ENCODE measurements at regions of chrX and their contacts with region 1.

Region 1: DNA sequence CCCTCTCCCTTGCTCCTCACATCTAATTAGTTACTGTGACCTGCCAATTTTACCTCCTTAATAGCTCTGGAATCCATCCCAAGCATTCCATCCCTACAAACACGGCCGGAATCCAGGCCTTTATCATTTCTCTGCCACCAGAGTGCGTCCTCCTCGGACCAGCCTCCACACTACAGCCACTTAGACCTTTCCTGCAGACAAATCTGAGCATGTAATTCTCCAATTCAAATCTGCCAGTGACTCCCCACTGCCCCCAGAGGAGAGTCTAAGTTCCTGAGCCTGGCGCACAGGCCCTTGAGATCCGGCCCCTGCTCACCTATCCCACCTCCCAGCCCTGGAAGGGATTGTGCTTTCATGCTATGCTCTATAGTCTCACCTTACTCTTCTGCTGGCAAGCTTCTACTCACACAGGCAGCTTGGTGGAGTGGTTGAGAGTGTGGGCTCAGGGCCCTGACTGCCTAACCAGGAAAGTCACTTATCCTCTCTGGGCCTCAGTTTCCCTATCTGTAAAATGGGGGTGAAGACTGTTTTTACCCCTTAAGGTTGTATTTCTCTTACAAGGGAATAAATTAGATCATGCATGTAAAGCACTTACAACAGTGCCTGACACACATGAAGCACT is 31.2 kb downstream of the PJA1 start:
- DNase-seq: no peak
- ATAC-seq: no peak
- H3K4me3 ChIP-seq: no peak overlapping the region
- H3K27ac ChIP-seq: no peak overlapping the region
- H3K4me1 ChIP-seq: no peaks in the 10 kb centered on the region
- H3K27me3 ChIP-seq: peaks cover 0 to 3% (median 0%) of the 10 kb centered on the region in 3 donors
- CTCF ChIP-seq: peak in 1 of 5 experiments; percentile 36
- POLR2A ChIP-seq: no peak

Region 2: DNA sequence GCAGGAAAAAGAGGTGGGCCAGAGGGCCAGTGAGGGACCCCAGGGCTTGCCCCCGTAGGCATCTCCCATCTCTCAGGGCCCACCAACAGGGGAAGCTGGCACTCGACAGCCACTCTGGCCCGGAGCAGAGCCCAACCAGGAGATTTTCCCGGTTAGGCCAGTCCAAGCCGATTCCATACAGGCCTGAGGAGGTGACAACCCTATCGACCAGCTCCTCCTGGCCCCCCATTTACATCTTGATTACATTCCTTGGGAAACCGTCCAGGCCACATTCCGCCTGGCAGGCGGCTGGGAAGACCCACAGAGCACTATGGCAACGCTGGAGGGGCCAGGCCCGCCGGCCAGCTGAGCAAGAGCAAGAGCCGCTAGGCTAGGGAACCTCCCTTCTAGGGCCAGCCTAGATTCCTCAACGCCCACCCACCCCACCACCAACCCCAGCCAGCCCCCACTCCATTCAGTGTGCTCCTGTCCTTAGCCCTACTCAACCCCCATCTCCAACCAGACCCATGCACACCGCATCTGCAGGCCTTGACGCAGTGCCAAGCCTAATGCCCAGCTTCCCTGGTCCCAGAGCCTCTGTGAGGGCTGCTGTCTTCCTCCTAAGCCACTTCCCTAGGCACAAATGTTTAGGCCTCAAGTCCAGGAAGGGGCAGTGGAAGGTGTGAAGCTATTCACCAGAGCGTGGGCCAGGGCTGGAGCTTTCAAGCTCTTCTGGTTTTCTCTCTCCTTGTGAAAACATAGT is 144.0 kb before region 1 on chrX:
- in situ Hi-C with region 1: no loop called
- intact Hi-C with region 1: no loop called
- DNase-seq: no peak
- ATAC-seq: peak in 1 of 2 donors; percentile 30
- H3K4me3 ChIP-seq: no peak overlapping the region
- H3K27ac ChIP-seq: no peak overlapping the region
- H3K4me1 ChIP-seq: no peaks in the 10 kb centered on the region
- H3K27me3 ChIP-seq: no peaks in the 10 kb centered on the region
- CTCF ChIP-seq: no peak
- POLR2A ChIP-seq: no peak

Region 3: DNA sequence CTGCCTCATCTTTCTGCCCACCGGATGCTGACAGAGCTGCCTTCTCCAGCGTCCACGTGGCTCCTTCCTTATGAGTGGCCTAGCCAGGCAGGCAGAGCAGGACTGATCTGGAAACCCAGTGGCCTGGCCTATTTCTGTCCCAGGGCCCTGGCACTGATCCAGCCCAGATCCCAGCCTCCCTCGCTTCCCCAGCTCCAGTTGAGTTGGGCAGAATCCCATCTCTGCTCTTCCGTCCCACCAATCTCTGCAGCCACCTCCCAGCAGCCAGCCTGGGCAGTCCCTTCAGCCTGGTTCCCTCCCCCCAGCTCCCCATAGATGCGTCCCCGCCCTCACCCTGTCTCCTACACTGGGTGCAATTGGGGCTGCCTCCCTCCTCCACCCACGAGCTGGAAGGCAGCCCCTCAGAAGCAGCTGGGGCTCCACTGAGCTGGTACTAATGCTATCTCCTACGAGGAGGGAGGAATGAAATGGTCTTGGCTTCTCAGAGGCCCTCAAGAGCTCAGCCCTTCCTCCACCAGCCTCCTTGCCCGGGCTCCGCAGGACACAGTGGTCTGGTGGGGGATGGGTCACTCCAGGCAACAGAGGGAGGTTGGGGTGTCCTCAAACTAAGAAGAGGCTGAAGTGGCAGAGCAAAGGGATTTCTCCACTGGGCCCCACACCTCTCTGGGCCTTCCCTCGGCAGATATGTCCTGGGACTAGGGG is 62.9 kb before region 1 on chrX:
- in situ Hi-C with region 1: no loop called
- intact Hi-C with region 1: loop called (anchors 10 kb)
- DNase-seq: peak in 1 of 2 donors; percentile 38
- ATAC-seq: no peak
- H3K4me3 ChIP-seq: no peak overlapping the region
- H3K27ac ChIP-seq: no peak overlapping the region
- H3K4me1 ChIP-seq: no peaks in the 10 kb centered on the region
- H3K27me3 ChIP-seq: no peaks in the 10 kb centered on the region
- CTCF ChIP-seq: no peak
- POLR2A ChIP-seq: no peak

Region 4: GRCh38 chrX:69243276-69243675 is 109.2 kb after region 1 on chrX:
- in situ Hi-C with region 1: no loop called
- intact Hi-C with region 1: no loop called
- DNase-seq: no peak
- ATAC-seq: no peak
- H3K4me3 ChIP-seq: no peak overlapping the region
- H3K27ac ChIP-seq: no peak overlapping the region
- H3K4me1 ChIP-seq: no peaks in the 10 kb centered on the region
- H3K27me3 ChIP-seq: peaks cover 0 to 4% (median 0%) of the 10 kb centered on the region in 3 donors
- CTCF ChIP-seq: no peak
- POLR2A ChIP-seq: no peak

Measured in gastrocnemius medialis (tissue), 4 donors.